Activated CD4-positive, alpha-beta T cell treated with anti-CD3 and anti-CD28 coated beads for 36 hours (primary cell): ENCODE measurements at regions of chr3 and their contacts with region 1.

Region 1: GRCh38 chr3:180912304-180913296 is at the start of gene FXR1:
- DNase-seq: peak; percentile 96
- ATAC-seq: peak; percentile 97
- H3K4me3 Mint-ChIP-seq: peak within 1 kb of the TSS; percentile 98
- H3K27ac Mint-ChIP-seq: peak within 1 kb of the TSS; percentile 98
- H3K4me1 Mint-ChIP-seq: peaks cover 48% of the 10 kb centered on the region
- H3K27me3 Mint-ChIP-seq: no peaks in the 10 kb centered on the region
- total RNA-seq, gene FXR1: 175 to 186 TPM

Region 2: GRCh38 chr3:179653096-179653797 is 1259.4 kb before region 1 on chr3:
- CTCF ChIA-PET with region 1: no interaction called
- POLR2A ChIA-PET with region 1: no interaction called
- intact Hi-C with region 1: loop called in 1 of 2 experiments (anchors 5 kb)
- DNase-seq: peak; percentile 81
- ATAC-seq: peak; percentile 69
- H3K4me3 Mint-ChIP-seq: peak overlapping the region; percentile 81
- H3K27ac Mint-ChIP-seq: peak overlapping the region; percentile 82
- H3K4me1 Mint-ChIP-seq: peaks cover 22% of the 10 kb centered on the region
- H3K27me3 Mint-ChIP-seq: peaks cover 7% of the 10 kb centered on the region

Region 3: DNA sequence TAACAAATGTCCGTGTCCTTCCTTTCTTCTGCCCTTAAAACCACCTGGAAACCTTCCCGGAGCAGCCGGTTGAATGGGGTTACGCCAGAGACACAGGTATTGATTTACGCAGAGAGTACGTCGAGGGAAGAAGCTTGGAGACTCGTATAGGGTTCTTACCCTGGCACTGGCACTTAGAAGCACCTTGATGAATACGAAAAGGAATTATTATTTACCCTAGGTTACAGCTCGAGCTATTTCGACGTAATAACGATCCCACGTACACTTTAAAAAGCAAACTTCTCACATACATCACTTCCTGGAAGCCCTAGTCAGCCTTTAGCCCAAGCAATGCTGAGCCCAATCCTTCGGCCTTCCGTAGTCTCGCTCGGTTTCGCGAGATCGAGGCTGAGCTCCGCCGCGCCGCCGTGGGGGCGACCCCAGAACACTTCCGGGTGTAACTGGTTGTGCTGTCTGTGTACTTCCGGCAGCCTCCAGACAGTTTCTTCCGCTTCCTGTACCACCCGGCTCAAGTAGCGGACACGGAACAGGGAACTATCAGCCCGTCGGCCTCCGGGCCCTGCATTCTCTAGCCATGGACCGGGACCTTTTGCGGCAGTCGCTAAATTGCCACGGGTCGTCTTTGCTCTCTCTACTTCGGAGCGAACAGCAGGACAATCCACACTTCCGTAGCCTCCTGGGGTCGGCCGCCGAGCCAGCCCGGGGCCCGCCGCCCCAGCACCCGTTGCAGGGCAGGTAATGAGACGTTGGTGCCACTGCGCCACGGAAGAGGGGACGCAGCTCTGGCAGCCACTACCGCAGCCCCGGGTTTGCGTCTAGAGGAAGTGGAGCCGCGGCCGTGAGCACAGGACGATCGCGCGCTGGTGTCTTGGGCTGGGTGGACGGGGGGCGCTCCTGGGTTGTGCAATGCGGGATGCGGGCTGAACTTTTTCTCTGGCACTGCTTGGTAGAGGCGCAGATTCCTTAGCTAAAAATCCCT is 310.6 kb before region 1 on chr3 and contains the start of gene TTC14:
- CTCF ChIA-PET with region 1: interaction called, 3 read pairs
- POLR2A ChIA-PET with region 1: no interaction called
- intact Hi-C with region 1: loop called (anchors 1 to 5 kb)
- DNase-seq: peak; percentile 96
- ATAC-seq: peak; percentile 96
- H3K4me3 Mint-ChIP-seq: peak within 1 kb of the TSS; percentile 98
- H3K27ac Mint-ChIP-seq: peak within 1 kb of the TSS; percentile 98
- H3K4me1 Mint-ChIP-seq: peaks cover 17% of the 10 kb centered on the region
- H3K27me3 Mint-ChIP-seq: peaks cover 4% of the 10 kb centered on the region
- total RNA-seq, gene TTC14: 38.0 to 41.2 TPM

Region 4: DNA sequence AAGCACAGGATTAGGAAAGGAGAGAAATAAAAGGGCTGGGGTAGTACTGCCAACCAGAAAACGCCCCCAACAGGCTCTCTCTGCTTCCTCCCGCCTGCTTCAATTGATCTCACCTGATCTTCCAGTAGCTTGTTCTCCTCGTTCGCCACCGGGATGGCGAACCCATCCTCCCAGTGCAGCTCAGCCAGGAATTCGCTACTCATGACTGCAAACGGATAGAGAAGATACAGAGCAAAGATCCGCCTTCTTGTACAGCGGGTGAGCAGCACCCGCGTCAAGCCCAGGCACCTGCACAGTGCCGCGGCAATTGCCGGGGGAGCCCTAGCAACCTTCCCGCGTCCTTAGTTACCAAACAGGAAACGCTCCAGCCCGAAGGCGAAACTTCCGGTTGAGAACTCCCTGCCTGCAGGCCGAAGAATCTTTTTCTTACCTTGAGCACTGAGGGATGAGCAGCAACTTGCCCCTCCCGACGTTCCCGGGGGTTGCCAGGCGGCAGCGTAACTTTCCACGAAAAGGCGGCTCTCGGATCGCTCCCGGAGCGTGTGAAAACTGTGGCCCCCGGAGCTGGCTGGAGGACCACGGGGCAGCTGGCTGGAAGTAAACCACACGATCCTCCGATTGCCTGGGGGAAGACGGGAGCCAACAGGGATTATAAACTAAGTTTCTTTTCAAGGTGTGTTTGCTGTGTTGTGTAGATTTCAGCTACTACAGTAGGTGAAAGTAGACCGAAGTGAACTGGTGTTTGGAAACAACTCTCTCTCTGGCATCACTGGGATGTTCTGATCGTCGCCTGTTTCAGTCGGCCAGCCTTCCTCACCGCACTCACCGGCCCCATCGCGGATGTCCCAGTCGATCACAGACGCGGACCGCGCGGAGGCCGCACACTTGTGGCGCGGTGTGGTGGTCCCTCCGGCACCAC is 233.2 kb before region 1 on chr3 and contains the start of gene CCDC39:
- CTCF ChIA-PET with region 1: no interaction called
- POLR2A ChIA-PET with region 1: no interaction called
- intact Hi-C with region 1: loop called in 1 of 2 experiments (anchors 5 kb)
- DNase-seq: peak; percentile 80
- ATAC-seq: peak; percentile 87
- H3K4me3 Mint-ChIP-seq: peak within 1 kb of the TSS; percentile 62
- H3K27ac Mint-ChIP-seq: no peak within 1 kb of the TSS
- H3K4me1 Mint-ChIP-seq: peaks cover 13% of the 10 kb centered on the region
- H3K27me3 Mint-ChIP-seq: peaks cover 49% of the 10 kb centered on the region
- total RNA-seq, gene CCDC39: not detected

Region 5: GRCh38 chr3:180875124-180875698 is 37.4 kb before region 1 on chr3:
- CTCF ChIA-PET with region 1: no interaction called
- POLR2A ChIA-PET with region 1: no interaction called
- intact Hi-C with region 1: no loop called
- DNase-seq: no peak
- ATAC-seq: no peak
- H3K4me3 Mint-ChIP-seq: no peak overlapping the region
- H3K27ac Mint-ChIP-seq: no peak overlapping the region
- H3K4me1 Mint-ChIP-seq: peaks cover 2% of the 10 kb centered on the region
- H3K27me3 Mint-ChIP-seq: peaks cover 24% of the 10 kb centered on the region

Region 6: DNA sequence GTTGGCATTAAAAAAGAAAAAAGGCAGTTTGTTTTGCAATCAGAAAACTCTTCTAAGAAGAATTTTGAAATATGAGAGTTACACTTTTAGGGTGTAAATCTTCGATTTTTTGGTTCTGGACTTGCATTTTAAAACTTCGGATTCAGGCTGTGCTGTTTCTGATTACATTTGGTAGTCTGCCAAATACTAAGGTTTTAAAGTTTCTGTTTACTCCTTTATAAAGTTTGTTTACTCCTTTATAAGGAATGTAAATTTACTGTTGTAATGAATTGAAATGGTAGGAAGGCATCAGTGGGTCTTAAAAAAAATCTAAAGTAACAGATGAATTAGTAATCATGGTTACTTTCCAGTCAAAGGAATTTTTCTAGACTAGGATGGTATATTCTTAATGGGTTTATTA is 13.9 kb after region 1 on chr3:
- CTCF ChIA-PET with region 1: interaction called, 3 read pairs
- POLR2A ChIA-PET with region 1: interaction called, 3 read pairs
- intact Hi-C with region 1: loop called in 1 of 2 experiments (anchors 1 kb)
- DNase-seq: no peak
- ATAC-seq: no peak
- H3K4me3 Mint-ChIP-seq: no peak overlapping the region
- H3K27ac Mint-ChIP-seq: no peak overlapping the region
- H3K4me1 Mint-ChIP-seq: peaks cover 66% of the 10 kb centered on the region
- H3K27me3 Mint-ChIP-seq: no peaks in the 10 kb centered on the region

Region 7: GRCh38 chr3:180989291-180990163 is 76.9 kb after region 1 on chr3 and contains the start of gene DNAJC19:
- CTCF ChIA-PET with region 1: interaction called, 3 read pairs
- POLR2A ChIA-PET with region 1: no interaction called
- intact Hi-C with region 1: loop called (anchors 1 kb)
- DNase-seq: peak; percentile 94
- ATAC-seq: peak; percentile 97
- H3K4me3 Mint-ChIP-seq: peak within 1 kb of the TSS; percentile 86
- H3K27ac Mint-ChIP-seq: peak within 1 kb of the TSS; percentile 94
- H3K4me1 Mint-ChIP-seq: peaks cover 25% of the 10 kb centered on the region
- H3K27me3 Mint-ChIP-seq: peaks cover 5% of the 10 kb centered on the region
- total RNA-seq, gene DNAJC19: 55.0 to 80.7 TPM